CD4-positive, alpha-beta memory T cell (primary cell): ENCODE measurements at regions of chr5 and their contacts with region 1.

Region 1: DNA sequence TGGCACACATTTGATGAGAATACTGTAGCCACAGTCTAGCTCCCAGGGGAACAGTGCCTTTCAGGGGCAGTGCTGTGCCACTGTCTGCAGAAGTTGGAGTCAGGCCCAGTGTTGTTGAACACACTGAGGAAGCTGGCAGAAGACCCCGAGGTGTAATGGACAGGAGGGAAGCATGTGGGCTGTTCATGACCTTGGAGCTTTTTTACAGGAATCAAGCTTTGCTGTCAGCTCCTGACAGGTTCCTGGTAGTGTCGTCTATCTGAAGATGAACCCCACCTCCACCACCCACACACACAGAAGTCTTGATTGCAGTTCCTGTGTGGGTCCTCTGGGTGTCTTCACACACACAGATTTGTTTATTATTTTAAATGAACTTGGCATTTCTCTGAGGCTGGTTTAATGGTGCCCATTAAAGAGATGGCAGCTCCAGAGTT is 40.3 kb upstream of the TNFAIP8 start:
- DNase-seq: peak; percentile 64 to 78 (median 70)
- H3K4me3 ChIP-seq: no peak overlapping the region
- H3K4me3 Mint-ChIP-seq: peak overlapping the region; percentile 52 to 75 (median 68)
- H3K27ac ChIP-seq: peak overlapping the region; percentile 41
- H3K27ac Mint-ChIP-seq: peak overlapping the region; percentile 90 to 99 (median 92)
- H3K4me1 ChIP-seq: peaks cover 96% of the 10 kb centered on the region
- H3K4me1 Mint-ChIP-seq: peaks cover 79 to 96% (median 87%) of the 10 kb centered on the region in 4 donors
- H3K27me3 ChIP-seq: no peaks in the 10 kb centered on the region
- H3K27me3 Mint-ChIP-seq: no peaks in the 10 kb centered on the region

Region 2: DNA sequence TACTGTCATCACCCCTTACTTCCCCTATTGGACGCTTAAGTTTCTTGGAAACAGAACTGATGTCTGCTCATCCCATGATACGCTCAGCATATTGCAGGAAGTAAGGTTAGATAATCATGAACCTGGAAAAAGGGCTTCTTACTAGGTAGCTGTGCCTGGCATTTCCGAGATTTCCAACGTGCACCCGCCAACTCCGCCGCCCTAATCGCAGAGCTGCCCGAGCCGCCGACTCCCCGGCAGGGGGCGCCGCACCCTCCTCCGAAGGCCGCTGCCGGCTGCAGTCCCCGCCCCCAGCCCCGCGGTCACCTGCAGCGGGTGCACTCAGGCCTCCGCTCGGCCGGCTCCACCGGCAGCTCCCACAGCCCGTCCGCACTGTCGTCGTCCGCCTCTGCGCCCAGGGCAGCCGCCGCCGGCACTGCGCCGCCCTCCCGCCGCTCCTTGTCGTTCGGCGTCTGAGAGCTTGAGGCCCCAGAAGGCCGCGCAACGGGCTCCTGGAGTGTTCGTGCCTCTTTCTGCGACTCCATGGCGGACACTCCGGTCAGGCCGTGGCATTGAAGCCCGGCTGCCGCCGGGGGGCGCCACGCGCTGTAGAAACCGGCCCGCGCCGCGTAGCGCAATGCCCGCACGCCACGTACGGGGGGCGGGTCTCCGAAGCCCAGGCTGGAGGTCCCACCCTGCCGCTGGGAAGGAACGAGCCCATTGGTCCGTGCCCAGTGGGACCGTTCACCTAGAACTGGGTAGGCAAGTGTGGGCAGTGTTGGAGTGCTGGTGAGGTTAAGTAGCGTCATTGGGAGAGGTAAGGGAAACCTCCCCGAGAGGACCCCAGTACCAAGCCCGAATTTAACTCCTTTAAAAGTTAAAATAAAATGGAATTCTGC is 327.3 kb before region 1 on chr5 and contains the start of gene DTWD2:
- CTCF ChIA-PET with region 1: interaction called, 20 read pairs
- POLR2A ChIA-PET with region 1: interaction called, 3 read pairs
- intact Hi-C with region 1: no loop called
- DNase-seq: peak; percentile 86 to 98 (median 94)
- H3K4me3 ChIP-seq: peak within 1 kb of the TSS; percentile 57 to 70
- H3K4me3 Mint-ChIP-seq: peak within 1 kb of the TSS; percentile 80 to 87 (median 84)
- H3K27ac ChIP-seq: peak within 1 kb of the TSS; percentile 66
- H3K27ac Mint-ChIP-seq: peak within 1 kb of the TSS; percentile 66 to 90 (median 80)
- H3K4me1 ChIP-seq: peaks cover 16% of the 10 kb centered on the region
- H3K4me1 Mint-ChIP-seq: peaks cover 9 to 20% (median 11%) of the 10 kb centered on the region in 4 donors
- H3K27me3 ChIP-seq: no peaks in the 10 kb centered on the region
- H3K27me3 Mint-ChIP-seq: no peaks in the 10 kb centered on the region
- total RNA-seq, gene DTWD2: 3.5 TPM

Region 3: GRCh38 chr5:119221330-119221729 is 94.2 kb before region 1 on chr5:
- CTCF ChIA-PET with region 1: no interaction called
- POLR2A ChIA-PET with region 1: no interaction called
- intact Hi-C with region 1: no loop called
- DNase-seq: no peak
- H3K4me3 ChIP-seq: no peak overlapping the region
- H3K4me3 Mint-ChIP-seq: no peak overlapping the region
- H3K27ac ChIP-seq: no peak overlapping the region
- H3K27ac Mint-ChIP-seq: no peak overlapping the region
- H3K4me1 ChIP-seq: no peaks in the 10 kb centered on the region
- H3K4me1 Mint-ChIP-seq: peaks cover 0 to 1% (median 0%) of the 10 kb centered on the region in 4 donors
- H3K27me3 ChIP-seq: no peaks in the 10 kb centered on the region
- H3K27me3 Mint-ChIP-seq: no peaks in the 10 kb centered on the region

Region 4: GRCh38 chr5:119274767-119275130 is 40.8 kb before region 1 on chr5:
- CTCF ChIA-PET with region 1: interaction called, 32 read pairs
- POLR2A ChIA-PET with region 1: interaction called, 151 read pairs
- intact Hi-C with region 1: no loop called
- DNase-seq: peak in 1 of 5 donors; percentile 84
- H3K4me3 ChIP-seq: peak overlapping the region in 1 of 2 donors; percentile 74
- H3K4me3 Mint-ChIP-seq: peak overlapping the region; percentile 82 to 100 (median 100)
- H3K27ac ChIP-seq: peak overlapping the region; percentile 71
- H3K27ac Mint-ChIP-seq: peak overlapping the region; percentile 90 to 99 (median 96)
- H3K4me1 ChIP-seq: peaks cover 89% of the 10 kb centered on the region
- H3K4me1 Mint-ChIP-seq: peaks cover 76 to 99% (median 85%) of the 10 kb centered on the region in 4 donors
- H3K27me3 ChIP-seq: no peaks in the 10 kb centered on the region
- H3K27me3 Mint-ChIP-seq: peaks cover 0 to 2% of the 10 kb centered on the region in 2 donors

Region 5: GRCh38 chr5:119302916-119303897 is 12.3 kb before region 1 on chr5:
- CTCF ChIA-PET with region 1: interaction called, 45 read pairs
- POLR2A ChIA-PET with region 1: interaction called, 66 read pairs
- intact Hi-C with region 1: loop called (anchors 2 kb)
- DNase-seq: no peak
- H3K4me3 ChIP-seq: peak overlapping the region; percentile 13 to 17
- H3K4me3 Mint-ChIP-seq: peak overlapping the region; percentile 17 to 96 (median 74)
- H3K27ac ChIP-seq: peak overlapping the region; percentile 43
- H3K27ac Mint-ChIP-seq: peak overlapping the region; percentile 80 to 99 (median 94)
- H3K4me1 ChIP-seq: peaks cover 83% of the 10 kb centered on the region
- H3K4me1 Mint-ChIP-seq: peaks cover 64 to 97% (median 79%) of the 10 kb centered on the region in 4 donors
- H3K27me3 ChIP-seq: no peaks in the 10 kb centered on the region
- H3K27me3 Mint-ChIP-seq: no peaks in the 10 kb centered on the region

Region 6: DNA sequence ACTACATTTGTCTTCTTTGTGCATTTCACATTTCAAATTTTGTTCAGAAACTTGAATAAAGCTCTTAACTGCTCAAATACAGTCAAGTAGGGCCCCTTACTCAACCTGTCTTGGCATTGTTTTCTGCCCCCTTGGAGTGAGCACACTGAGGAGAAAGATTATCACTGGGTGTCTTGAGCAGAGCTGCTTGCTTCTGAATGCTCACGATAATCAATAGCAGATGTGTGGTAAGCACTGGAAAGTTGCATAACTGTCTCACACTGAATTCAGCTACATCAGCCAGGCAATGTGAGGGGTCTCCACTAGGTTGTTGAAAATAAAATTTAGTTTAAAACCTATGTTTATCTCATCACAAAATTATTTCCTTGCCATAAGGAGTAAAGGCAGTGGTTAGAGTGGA is 32.5 kb after region 1 on chr5:
- CTCF ChIA-PET with region 1: interaction called, 149 read pairs
- POLR2A ChIA-PET with region 1: interaction called, 564 read pairs
- intact Hi-C with region 1: no loop called
- DNase-seq: no peak
- H3K4me3 ChIP-seq: no peak overlapping the region
- H3K4me3 Mint-ChIP-seq: peak overlapping the region in 3 of 8 donors; percentile 15 to 88 (median 83)
- H3K27ac ChIP-seq: no peak overlapping the region
- H3K27ac Mint-ChIP-seq: peak overlapping the region; percentile 36 to 95 (median 78)
- H3K4me1 ChIP-seq: peaks cover 97% of the 10 kb centered on the region
- H3K4me1 Mint-ChIP-seq: peaks cover 78 to 96% (median 86%) of the 10 kb centered on the region in 4 donors
- H3K27me3 ChIP-seq: no peaks in the 10 kb centered on the region
- H3K27me3 Mint-ChIP-seq: no peaks in the 10 kb centered on the region

Region 7: GRCh38 chr5:119367502-119368237 is 52.1 kb after region 1 on chr5:
- CTCF ChIA-PET with region 1: interaction called, 30 read pairs
- POLR2A ChIA-PET with region 1: interaction called, 9 read pairs
- intact Hi-C with region 1: loop called (anchors 2 kb)
- DNase-seq: peak in 1 of 5 donors; percentile 71
- H3K4me3 ChIP-seq: peak overlapping the region in 1 of 2 donors; percentile 28
- H3K4me3 Mint-ChIP-seq: peak overlapping the region in 7 of 8 donors; percentile 61 to 83 (median 68)
- H3K27ac ChIP-seq: peak overlapping the region; percentile 62
- H3K27ac Mint-ChIP-seq: peak overlapping the region; percentile 85 to 91 (median 88)
- H3K4me1 ChIP-seq: peaks cover 87% of the 10 kb centered on the region
- H3K4me1 Mint-ChIP-seq: peaks cover 70 to 87% (median 79%) of the 10 kb centered on the region in 4 donors
- H3K27me3 ChIP-seq: no peaks in the 10 kb centered on the region
- H3K27me3 Mint-ChIP-seq: no peaks in the 10 kb centered on the region